Mammary epithelial cell (primary cell): ENCODE measurements at regions of chr5 and their contacts with region 1.

Region 1: DNA sequence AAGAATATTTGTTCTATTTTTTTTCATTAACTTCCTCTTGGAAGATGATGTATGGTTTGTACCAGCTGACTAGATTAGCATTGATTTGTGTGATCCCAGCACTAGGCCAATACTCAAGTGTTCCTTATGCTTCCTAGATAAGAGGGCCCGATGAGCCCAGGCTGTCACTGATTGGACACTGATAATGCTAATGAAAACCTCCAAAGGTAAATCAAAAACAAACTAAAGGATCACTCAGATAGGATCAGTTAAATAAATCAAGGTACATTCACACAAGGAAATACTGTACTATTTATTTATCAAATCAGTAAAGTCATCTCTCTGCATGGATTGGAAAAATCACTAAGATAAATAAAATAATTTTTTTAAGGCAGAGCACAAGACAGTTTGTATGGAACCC is 52.6 kb upstream of the OTULINL start:
- DNase-seq: no peak
- H3K4me3 ChIP-seq: no peak overlapping the region
- H3K27ac ChIP-seq: no peak overlapping the region
- H3K4me1 ChIP-seq: no peaks in the 10 kb centered on the region
- H3K27me3 ChIP-seq: no peaks in the 10 kb centered on the region
- CTCF ChIP-seq: no peak

Region 2: DNA sequence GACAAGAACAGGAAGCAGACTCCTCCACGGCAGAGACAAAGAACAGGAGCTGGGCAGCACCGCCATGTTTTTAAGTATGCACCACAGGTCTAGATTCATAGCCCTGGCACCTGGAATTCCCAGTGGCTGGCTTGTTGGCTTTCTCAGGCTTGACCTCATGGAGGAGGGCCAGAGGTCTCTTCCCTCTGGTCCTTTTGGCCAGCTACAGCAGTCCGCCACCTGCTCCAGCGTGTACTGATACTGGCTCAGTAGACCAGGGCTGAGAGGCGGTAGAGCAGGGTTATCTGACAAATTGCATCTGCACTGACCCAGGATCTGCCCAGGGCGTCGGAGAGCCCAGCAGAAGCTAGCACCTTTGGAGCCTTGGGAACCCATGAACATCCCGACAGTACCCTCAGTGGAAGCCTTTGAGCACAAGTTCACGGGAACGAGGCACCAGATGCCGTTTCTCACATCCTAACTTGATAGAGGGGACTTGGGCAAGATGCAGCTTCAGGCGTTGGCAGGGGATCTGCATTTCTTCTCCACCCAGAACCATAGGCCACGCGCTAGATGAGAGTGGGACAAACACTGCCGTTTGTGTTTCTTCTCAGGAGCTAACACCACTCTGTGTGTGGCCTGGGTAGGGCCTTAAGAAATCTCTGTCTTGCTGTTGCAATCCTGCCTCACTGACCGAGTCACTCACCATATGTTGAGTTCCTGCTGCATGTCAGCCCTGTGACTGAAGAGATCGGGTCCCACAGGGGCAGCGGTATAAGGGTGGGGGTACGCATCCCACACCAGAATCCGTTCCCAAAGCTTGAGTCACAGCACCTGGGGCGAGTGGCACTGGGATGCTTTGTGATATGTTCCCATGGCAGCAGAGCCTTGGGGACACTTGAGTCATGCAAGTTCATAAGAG is 37.7 kb before region 1 on chr5:
- CTCF ChIA-PET with region 1: no interaction called
- dilution Hi-C with region 1: loop called (anchors 5 kb)
- in situ Hi-C with region 1: no loop called
- intact Hi-C with region 1: no loop called
- DNase-seq: no peak
- H3K4me3 ChIP-seq: no peak overlapping the region
- H3K27ac ChIP-seq: no peak overlapping the region
- H3K4me1 ChIP-seq: no peaks in the 10 kb centered on the region
- H3K27me3 ChIP-seq: no peaks in the 10 kb centered on the region
- CTCF ChIP-seq: no peak

Region 3: GRCh38 chr5:14574891-14575496 is 46.0 kb after region 1 on chr5:
- CTCF ChIA-PET with region 1: no interaction called
- dilution Hi-C with region 1: loop called (anchors 5 kb)
- in situ Hi-C with region 1: no loop called
- intact Hi-C with region 1: no loop called
- DNase-seq: no peak
- H3K4me3 ChIP-seq: no peak overlapping the region
- H3K27ac ChIP-seq: no peak overlapping the region
- H3K4me1 ChIP-seq: no peaks in the 10 kb centered on the region
- H3K27me3 ChIP-seq: peaks cover 6% of the 10 kb centered on the region
- CTCF ChIP-seq: no peak

Region 4: GRCh38 chr5:14644623-14645237 is 115.7 kb after region 1 on chr5:
- CTCF ChIA-PET with region 1: no interaction called
- dilution Hi-C with region 1: no loop called
- in situ Hi-C with region 1: no loop called
- intact Hi-C with region 1: no loop called
- DNase-seq: no peak
- H3K4me3 ChIP-seq: no peak overlapping the region
- H3K27ac ChIP-seq: no peak overlapping the region
- H3K4me1 ChIP-seq: no peaks in the 10 kb centered on the region
- H3K27me3 ChIP-seq: peaks cover 3% of the 10 kb centered on the region
- CTCF ChIP-seq: no peak

Region 5: GRCh38 chr5:15209053-15209762 is 680.2 kb after region 1 on chr5:
- CTCF ChIA-PET with region 1: no interaction called
- dilution Hi-C with region 1: no loop called
- in situ Hi-C with region 1: no loop called
- intact Hi-C with region 1: no loop called
- DNase-seq: no peak
- H3K4me3 ChIP-seq: no peak overlapping the region
- H3K27ac ChIP-seq: no peak overlapping the region
- H3K4me1 ChIP-seq: no peaks in the 10 kb centered on the region
- H3K27me3 ChIP-seq: peaks cover 2% of the 10 kb centered on the region
- CTCF ChIP-seq: no peak